ENCODE measurements at regions of chr21 and their contacts with region 1.

Region 1: GRCh38 chr21:37366482-37367316 is at the start of gene DYRK1A:
- DNase-seq: peak; percentile 98
- ATAC-seq: peak; percentile 82
- H3K4me3 Mint-ChIP-seq: peak within 1 kb of the TSS; percentile 99
- H3K27ac Mint-ChIP-seq: peak within 1 kb of the TSS; percentile 100
- H3K4me1 Mint-ChIP-seq: peaks cover 42% of the 10 kb centered on the region
- H3K27me3 Mint-ChIP-seq: no peaks in the 10 kb centered on the region
- total RNA-seq, gene DYRK1A: 51.1 to 76.9 TPM

Region 2: GRCh38 chr21:36156339-36156814 is 1210.3 kb before region 1 on chr21:
- CTCF ChIA-PET with region 1: no interaction called
- POLR2A ChIA-PET with region 1: no interaction called
- intact Hi-C with region 1: loop called in 1 of 2 experiments (anchors 5 kb)
- DNase-seq: peak; percentile 100
- ATAC-seq: peak; percentile 93
- H3K4me3 Mint-ChIP-seq: peak overlapping the region; percentile 77
- H3K27ac Mint-ChIP-seq: no peak overlapping the region
- H3K4me1 Mint-ChIP-seq: peaks cover 23% of the 10 kb centered on the region
- H3K27me3 Mint-ChIP-seq: no peaks in the 10 kb centered on the region

Region 3: GRCh38 chr21:37060296-37060695 is 306.4 kb before region 1 on chr21:
- CTCF ChIA-PET with region 1: no interaction called
- POLR2A ChIA-PET with region 1: no interaction called
- intact Hi-C with region 1: no loop called
- DNase-seq: peak; percentile 57
- ATAC-seq: peak; percentile 99
- H3K4me3 Mint-ChIP-seq: no peak overlapping the region
- H3K27ac Mint-ChIP-seq: no peak overlapping the region
- H3K4me1 Mint-ChIP-seq: peaks cover 2% of the 10 kb centered on the region
- H3K27me3 Mint-ChIP-seq: no peaks in the 10 kb centered on the region

Region 4: DNA sequence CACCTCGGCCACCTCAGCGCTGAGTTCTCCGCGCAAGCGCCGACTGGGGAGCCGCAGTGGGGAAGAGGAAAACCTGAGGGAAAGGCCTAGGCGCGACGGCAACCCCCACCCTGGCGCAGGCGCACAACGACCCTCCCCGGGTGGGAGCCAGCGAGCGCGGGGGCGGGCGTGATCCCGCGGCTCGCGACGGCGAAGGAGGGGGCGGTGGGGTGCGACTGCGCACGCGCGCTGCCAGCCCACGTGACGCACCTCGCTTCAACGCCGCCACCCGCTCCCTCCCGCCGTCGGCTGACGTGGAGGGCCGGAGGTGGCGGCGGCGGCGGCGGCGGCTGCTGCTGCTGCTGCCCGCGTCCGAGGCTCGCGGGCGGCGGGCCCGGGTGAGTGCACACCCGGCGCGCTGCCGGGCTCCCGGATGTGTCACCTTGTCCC is 293.7 kb before region 1 on chr21 and contains the starts of genes PIGP and TTC3:
- CTCF ChIA-PET with region 1: no interaction called
- POLR2A ChIA-PET with region 1: no interaction called
- intact Hi-C with region 1: loop called (anchors 1 to 5 kb)
- DNase-seq: peak; percentile 97
- ATAC-seq: peak; percentile 74
- H3K4me3 Mint-ChIP-seq: peak within 1 kb of the TSS; percentile 99
- H3K27ac Mint-ChIP-seq: peak within 1 kb of the TSS; percentile 92
- H3K4me1 Mint-ChIP-seq: peaks cover 48% of the 10 kb centered on the region
- H3K27me3 Mint-ChIP-seq: no peaks in the 10 kb centered on the region
- total RNA-seq, gene PIGP: 32.8 to 41.0 TPM
- total RNA-seq, gene TTC3: 65.1 to 78.9 TPM

Region 5: DNA sequence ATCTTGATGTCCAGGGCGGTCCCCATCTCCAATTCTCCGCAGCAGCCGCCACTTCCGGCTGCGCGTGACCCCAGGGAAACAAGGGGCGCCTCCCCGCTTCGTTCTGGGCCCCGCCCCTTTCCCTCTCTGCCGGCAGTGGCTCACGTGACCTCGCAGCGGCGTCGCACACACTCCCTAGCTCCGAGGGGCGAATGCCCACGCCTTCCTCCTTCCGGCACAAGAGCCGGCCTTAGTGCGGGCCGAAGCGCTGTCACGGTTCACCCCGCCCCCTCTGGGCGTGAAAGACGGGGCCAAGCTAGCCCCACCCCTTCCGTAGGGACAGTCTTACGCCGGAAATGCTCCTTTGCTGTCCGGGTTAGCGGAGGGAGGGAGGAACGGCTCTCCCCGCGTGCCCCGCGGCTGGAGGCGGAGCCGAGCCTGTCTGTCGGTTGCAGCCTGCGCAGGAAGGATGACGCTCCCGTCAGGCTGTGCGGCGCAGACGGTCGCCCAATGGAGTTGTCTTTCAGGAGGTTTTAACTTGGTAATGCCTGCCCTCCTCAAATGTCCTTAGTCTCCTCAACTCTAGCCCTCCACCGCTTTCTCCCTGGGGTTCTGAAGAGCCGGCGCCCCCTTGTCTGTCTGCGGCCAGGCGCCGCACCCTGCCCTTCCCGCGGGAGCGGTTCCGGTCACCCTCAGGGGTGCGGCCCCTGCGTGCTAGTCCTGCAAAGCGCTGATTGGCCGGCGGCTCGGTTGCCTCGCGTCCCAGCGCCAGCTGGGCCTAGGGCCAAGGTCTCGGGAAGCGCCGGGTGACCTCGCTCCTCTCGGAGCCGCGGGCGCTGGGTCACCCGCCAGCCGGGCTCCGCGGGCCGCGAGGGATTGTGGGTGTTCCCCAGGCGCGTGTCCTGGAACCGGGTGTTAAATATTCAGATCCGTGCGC is 99.2 kb before region 1 on chr21 and contains the start of gene VPS26C:
- CTCF ChIA-PET with region 1: interaction called, 3 read pairs
- POLR2A ChIA-PET with region 1: interaction called, 17 read pairs
- intact Hi-C with region 1: loop called (anchors 1 kb)
- DNase-seq: peak; percentile 99
- ATAC-seq: peak; percentile 92
- H3K4me3 Mint-ChIP-seq: peak within 1 kb of the TSS; percentile 84
- H3K27ac Mint-ChIP-seq: peak within 1 kb of the TSS; percentile 99
- H3K4me1 Mint-ChIP-seq: peaks cover 28% of the 10 kb centered on the region
- H3K27me3 Mint-ChIP-seq: no peaks in the 10 kb centered on the region
- total RNA-seq, gene VPS26C: 54.8 to 61.7 TPM

Region 6: GRCh38 chr21:37319551-37319950 is 47.1 kb before region 1 on chr21:
- CTCF ChIA-PET with region 1: no interaction called
- POLR2A ChIA-PET with region 1: no interaction called
- intact Hi-C with region 1: no loop called
- DNase-seq: no peak
- ATAC-seq: no peak
- H3K4me3 Mint-ChIP-seq: no peak overlapping the region
- H3K27ac Mint-ChIP-seq: no peak overlapping the region
- H3K4me1 Mint-ChIP-seq: no peaks in the 10 kb centered on the region
- H3K27me3 Mint-ChIP-seq: peaks cover 2% of the 10 kb centered on the region

Region 7: GRCh38 chr21:37435120-37435519 is 68.4 kb after region 1 on chr21:
- CTCF ChIA-PET with region 1: no interaction called
- POLR2A ChIA-PET with region 1: no interaction called
- intact Hi-C with region 1: loop called in 1 of 2 experiments (anchors 2 kb)
- DNase-seq: peak; percentile 55
- ATAC-seq: peak; percentile 94
- H3K4me3 Mint-ChIP-seq: no peak overlapping the region
- H3K27ac Mint-ChIP-seq: no peak overlapping the region
- H3K4me1 Mint-ChIP-seq: peaks cover 41% of the 10 kb centered on the region
- H3K27me3 Mint-ChIP-seq: no peaks in the 10 kb centered on the region

Region 8: DNA sequence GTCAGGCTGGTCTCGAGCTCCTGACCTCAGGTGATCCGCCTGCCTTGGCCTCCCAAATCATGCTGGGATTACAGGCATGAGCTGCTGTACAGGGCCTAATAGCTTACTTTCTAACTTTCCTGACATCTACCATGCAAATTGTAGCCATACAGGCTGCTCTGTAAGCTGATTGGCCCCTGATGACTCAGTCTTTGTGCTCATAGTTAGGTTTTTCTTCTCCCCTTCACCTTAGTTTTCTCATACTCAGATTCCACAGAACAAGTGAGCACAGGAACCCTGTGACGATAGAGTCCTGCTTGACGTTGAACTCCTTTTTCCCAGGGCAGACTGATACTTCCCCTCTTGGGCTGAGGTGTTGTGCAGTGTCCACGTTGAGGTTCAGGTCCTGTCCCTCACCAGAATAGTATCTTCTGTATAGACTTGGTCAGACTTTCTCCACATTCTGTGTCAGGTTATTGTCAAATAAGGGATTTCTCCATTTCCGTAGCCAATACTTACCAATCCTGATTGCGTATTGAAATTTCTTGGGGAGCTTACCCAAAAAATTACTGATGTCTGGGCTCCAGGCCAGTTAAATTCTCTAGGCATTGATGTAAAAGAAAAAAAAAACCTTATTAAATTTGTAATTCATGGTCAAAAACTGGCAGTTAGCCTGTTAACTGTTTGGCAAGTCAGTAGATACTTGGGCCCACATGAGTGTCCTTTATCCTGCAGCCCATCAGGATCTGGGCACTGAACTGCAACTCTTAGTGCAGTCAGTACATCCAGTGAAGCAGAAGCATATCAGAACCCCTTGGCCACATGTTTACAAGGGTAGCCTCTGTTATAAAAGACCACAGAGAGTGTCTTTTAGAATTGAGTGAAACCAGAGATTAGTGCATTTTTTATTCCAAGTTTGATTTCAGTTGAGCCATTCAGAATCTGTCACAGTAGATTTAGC is 118.1 kb after region 1 on chr21:
- CTCF ChIA-PET with region 1: no interaction called
- POLR2A ChIA-PET with region 1: no interaction called
- intact Hi-C with region 1: no loop called
- DNase-seq: no peak
- ATAC-seq: peak; percentile 39
- H3K4me3 Mint-ChIP-seq: no peak overlapping the region
- H3K27ac Mint-ChIP-seq: peak overlapping the region; percentile 8
- H3K4me1 Mint-ChIP-seq: peaks cover 8% of the 10 kb centered on the region
- H3K27me3 Mint-ChIP-seq: no peaks in the 10 kb centered on the region

Region 9: DNA sequence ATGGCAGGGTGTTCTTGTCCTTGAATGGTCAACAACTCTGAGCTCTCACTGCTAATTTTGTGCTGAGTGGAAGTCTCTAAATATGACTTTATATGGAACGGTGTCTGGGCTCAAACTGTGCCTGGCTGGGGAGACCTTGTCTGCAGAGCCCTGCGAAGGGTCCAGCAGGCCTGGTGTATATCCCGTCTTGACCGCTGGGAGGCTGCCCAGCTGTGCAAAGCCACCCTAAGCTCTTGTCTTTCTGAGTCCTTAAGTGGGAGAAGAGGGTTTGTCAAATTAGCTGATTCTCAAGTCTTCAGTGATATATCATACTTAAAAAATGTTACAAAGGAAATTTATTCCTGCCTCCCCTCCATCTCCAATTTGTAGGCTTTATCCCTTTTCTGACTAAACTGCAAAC is 350.8 kb after region 1 on chr21:
- CTCF ChIA-PET with region 1: no interaction called
- POLR2A ChIA-PET with region 1: no interaction called
- intact Hi-C with region 1: no loop called
- DNase-seq: no peak
- ATAC-seq: no peak
- H3K4me3 Mint-ChIP-seq: no peak overlapping the region
- H3K27ac Mint-ChIP-seq: no peak overlapping the region
- H3K4me1 Mint-ChIP-seq: no peaks in the 10 kb centered on the region
- H3K27me3 Mint-ChIP-seq: peaks cover 25% of the 10 kb centered on the region

Region 10: DNA sequence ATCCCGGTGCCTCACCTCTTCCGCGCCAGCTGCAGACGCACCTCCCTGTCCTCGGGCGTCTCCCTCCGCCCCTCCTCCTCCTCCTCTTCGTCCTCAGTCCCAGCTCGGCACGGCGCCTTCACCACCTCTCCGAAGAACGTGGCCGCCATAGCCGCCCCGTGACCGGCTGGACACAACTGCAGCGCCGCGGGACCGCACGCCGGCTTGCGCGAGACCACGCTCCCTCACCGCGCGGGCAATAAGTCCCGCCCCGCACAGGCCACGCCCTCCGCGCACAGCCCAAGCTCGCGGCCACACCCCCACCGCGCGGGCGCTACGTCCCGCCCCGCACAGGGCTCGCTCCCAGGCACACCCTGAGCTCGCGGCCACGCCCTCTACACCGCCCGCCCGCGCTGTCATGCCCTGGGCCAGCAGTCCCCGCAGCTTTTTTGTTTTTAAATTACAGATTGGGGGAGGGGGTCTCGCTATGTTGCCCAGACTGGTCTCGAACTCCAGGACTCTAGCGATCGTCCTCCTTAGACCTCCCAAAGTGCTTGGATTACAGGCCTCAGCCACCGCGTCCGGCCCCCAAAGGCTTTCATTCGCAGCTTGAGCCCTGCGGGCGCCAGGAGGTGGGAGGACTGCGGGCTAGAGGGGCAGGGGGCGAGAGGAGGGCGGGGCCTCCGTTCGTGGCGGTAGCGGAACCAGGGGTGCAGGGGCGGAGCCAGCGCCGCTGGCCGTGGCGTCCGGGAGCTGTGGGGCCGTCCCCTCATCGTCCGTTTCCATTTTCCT is 1816.7 kb after region 1 on chr21 and contains the start of gene PSMG1:
- CTCF ChIA-PET with region 1: no interaction called
- POLR2A ChIA-PET with region 1: no interaction called
- intact Hi-C with region 1: loop called in 1 of 2 experiments (anchors 5 kb)
- DNase-seq: peak; percentile 97
- ATAC-seq: peak; percentile 92
- H3K4me3 Mint-ChIP-seq: peak within 1 kb of the TSS; percentile 95
- H3K27ac Mint-ChIP-seq: peak within 1 kb of the TSS; percentile 97
- H3K4me1 Mint-ChIP-seq: peaks cover 63% of the 10 kb centered on the region
- H3K27me3 Mint-ChIP-seq: no peaks in the 10 kb centered on the region
- total RNA-seq, gene PSMG1: 109 to 123 TPM